ENCODE measurements at regions of chr1 and their contacts with region 1.

Region 1: DNA sequence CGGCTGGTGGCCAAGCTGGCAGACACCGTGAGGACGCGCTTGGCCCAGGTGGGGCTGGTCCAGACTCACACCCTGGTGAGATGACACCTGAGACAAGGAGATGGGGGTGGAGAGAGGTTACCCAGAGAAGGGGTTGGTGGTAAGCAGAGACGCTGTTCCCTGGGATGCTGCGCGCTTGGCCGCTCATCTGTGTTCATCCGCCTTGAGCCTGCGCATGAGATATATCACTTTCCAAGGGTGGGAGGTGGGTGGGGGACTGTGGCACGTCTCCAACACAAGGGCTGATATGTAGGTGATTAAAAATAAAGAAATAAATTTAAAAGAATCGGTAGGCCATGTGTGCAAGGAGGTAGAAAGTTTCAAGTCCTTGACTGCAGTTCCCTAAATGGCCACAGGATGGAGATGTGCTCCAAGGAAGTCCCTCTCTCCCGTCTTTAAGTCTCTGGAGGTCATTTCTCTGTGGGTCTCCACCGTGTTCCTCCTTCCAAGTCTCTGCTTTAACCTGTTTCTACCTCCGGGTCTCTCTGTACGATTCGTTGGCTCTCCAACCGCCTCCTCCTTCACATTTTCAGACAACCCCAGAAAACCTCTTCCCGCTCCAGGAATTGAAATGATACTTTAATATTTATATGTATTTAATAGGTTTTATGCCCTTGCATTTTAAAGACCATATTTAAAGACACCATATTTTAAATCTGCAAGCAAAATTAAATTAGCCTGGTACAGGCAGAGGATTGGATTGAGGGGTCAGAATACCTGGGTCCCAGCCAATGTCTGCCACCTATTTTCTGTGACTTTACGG is 4.5 kb downstream of the TTC24 start:
- DNase-seq: no peak
- ATAC-seq: peak; percentile 83
- H3K4me3 ChIP-seq: no peak overlapping the region
- H3K27ac ChIP-seq: no peak overlapping the region
- H3K4me1 ChIP-seq: peaks cover 16% of the 10 kb centered on the region
- H3K27me3 ChIP-seq: no peaks in the 10 kb centered on the region; a peak in 1 of 4 replicates
- CTCF ChIP-seq: peak; percentile 88 to 93 (median 89)
- EP300 ChIP-seq: no peak
- POLR2A ChIP-seq: no peak
- RAD21 ChIP-seq: peak; percentile 87

Region 2: DNA sequence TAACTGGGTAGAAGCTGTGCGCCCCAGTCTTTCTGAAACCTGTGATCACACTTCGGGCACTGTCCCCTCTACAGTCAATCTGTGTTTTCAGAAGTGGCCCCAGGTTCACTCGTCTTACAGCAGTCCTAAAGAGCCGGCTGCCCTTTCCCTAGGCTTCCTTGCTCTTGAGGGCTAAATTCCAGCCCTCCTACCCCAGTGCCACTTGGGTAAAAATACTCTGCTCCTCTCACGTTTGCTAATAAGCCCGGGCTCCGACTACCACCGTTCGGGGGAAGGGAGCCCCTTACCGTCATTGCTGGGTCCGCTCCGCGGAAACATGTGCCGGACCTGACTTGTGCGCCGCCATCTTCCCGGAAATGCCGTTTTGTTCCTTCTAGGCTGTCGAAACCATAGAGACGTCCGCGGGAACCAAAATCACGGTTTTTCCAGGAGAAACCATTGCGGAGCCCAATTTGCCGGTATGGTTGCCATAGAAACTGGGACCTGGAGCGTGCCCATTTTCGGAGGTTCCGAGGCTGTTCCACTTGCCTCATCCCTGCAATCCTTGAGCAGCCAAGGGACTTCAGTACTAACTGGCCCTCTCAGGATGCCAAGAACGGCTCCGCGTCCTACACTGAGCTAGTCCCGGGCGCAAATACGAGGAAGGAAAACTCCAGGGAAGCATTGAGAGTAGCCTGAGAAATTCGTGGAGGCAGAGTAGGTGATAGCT is 17.3 kb after region 1 on chr1 and contains the start of gene GPATCH4:
- CTCF ChIA-PET with region 1: interaction called, 25 read pairs
- POLR2A ChIA-PET with region 1: interaction called, 11 read pairs
- RAD21 ChIA-PET with region 1: interaction called, 4 read pairs
- SMC1A ChIA-PET with region 1: interaction called, 6 read pairs
- in situ Hi-C with region 1: no loop called
- intact Hi-C with region 1: no loop called
- DNase-seq: no peak
- ATAC-seq: peak; percentile 80
- H3K4me3 ChIP-seq: peak within 1 kb of the TSS; percentile 82
- H3K27ac ChIP-seq: peak within 1 kb of the TSS; percentile 93
- H3K4me1 ChIP-seq: peaks cover 9% of the 10 kb centered on the region
- H3K27me3 ChIP-seq: no peaks in the 10 kb centered on the region
- CTCF ChIP-seq: no peak
- EP300 ChIP-seq: 0 out of 4 replicates have a peak, but pooled peaks of 1 of the 2 experiments have one; percentile 13
- POLR2A ChIP-seq: peak; percentile 92
- RAD21 ChIP-seq: no peak
- polyA plus RNA-seq, gene GPATCH4: 82.5 to 90.4 TPM

Region 3: GRCh38 chr1:156838981-156839410 is 255.0 kb after region 1 on chr1:
- CTCF ChIA-PET with region 1: no interaction called
- POLR2A ChIA-PET with region 1: no interaction called
- RAD21 ChIA-PET with region 1: no interaction called
- SMC1A ChIA-PET with region 1: no interaction called
- in situ Hi-C with region 1: no loop called
- intact Hi-C with region 1: no loop called
- DNase-seq: no peak
- ATAC-seq: peak; percentile 57
- H3K4me3 ChIP-seq: no peak overlapping the region
- H3K27ac ChIP-seq: no peak overlapping the region
- H3K4me1 ChIP-seq: peaks cover 24% of the 10 kb centered on the region
- H3K27me3 ChIP-seq: no peaks in the 10 kb centered on the region; a peak in 1 of 4 replicates
- CTCF ChIP-seq: peak; percentile 80 to 94 (median 91)
- EP300 ChIP-seq: no peak
- POLR2A ChIP-seq: no peak
- RAD21 ChIP-seq: peak; percentile 86